HepG2 (cell line): ENCODE measurements at regions of chr13 and their contacts with region 1.

Region 1: GRCh38 chr13:29850224-29850898 is at the start of gene UBL3:
- DNase-seq: peak; percentile 90
- ATAC-seq: peak; percentile 85
- H3K4me3 ChIP-seq: peak within 1 kb of the TSS; percentile 65 to 96 (median 85)
- H3K27ac ChIP-seq: peak within 1 kb of the TSS; percentile 81
- H3K4me1 ChIP-seq: peaks cover 21% of the 10 kb centered on the region
- H3K27me3 ChIP-seq: no peaks in the 10 kb centered on the region; a peak in 1 of 5 replicates
- CTCF ChIP-seq: 0 out of 2 replicates have a peak, but pooled peaks have one; percentile 14
- EP300 ChIP-seq: peak in 1 of 2 experiments; percentile 15; a peak in 1 of 4 replicates
- POLR2A ChIP-seq: peak; percentile 46 to 64; a peak in 3 of 4 replicates
- RAD21 ChIP-seq: no peak
- total RNA-seq, gene UBL3: 7.4 and 10.9 TPM in 2 replicates

Region 2: DNA sequence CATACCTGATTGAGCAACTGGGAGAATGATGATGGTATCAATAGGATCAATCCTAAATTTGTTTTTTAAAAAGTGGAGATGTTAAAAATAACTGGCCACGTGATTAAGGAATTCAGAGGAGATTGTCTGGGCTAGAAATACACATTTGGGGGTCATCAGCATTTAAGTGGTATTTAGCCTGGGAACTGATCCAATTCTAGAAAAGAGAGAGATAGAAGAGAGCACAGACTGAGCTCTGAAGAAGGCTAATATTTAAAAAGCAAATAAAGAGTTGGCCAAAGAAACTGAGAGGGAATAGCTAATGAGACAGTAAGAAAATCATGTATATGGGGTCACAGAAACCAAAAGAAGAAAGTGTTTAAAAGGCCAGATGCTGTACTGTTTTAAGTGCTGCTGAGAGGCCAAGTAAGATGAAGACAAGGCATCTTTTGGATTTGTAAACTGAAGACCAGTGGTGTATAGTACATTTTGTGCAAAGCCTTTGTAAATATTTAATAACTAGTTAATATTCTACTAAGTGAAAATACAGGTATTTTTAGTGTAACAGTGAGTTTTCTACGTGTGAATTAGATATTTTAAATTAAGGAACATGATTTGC is 40.1 kb before region 1 on chr13:
- CTCF ChIA-PET with region 1: no interaction called
- POLR2A ChIA-PET with region 1: no interaction called
- in situ Hi-C with region 1: no loop called
- intact Hi-C with region 1: loop called (anchors 5 kb)
- DNase-seq: peak; percentile 5
- ATAC-seq: peak; percentile 72
- H3K4me3 ChIP-seq: peak overlapping the region in 1 of 3 experiments; percentile 5; a peak in 1 of 6 replicates
- H3K27ac ChIP-seq: peak overlapping the region; percentile 30
- H3K4me1 ChIP-seq: peaks cover 36% of the 10 kb centered on the region
- H3K27me3 ChIP-seq: no peaks in the 10 kb centered on the region
- CTCF ChIP-seq: no peak
- EP300 ChIP-seq: no peak
- POLR2A ChIP-seq: no peak
- RAD21 ChIP-seq: no peak

Region 3: GRCh38 chr13:29923554-29924481 is 73.5 kb after region 1 on chr13:
- CTCF ChIA-PET with region 1: interaction called, 4 read pairs
- POLR2A ChIA-PET with region 1: interaction called, 58 read pairs
- in situ Hi-C with region 1: loop called (anchors 5 kb)
- intact Hi-C with region 1: loop called (anchors 1 kb)
- DNase-seq: peak; percentile 99
- ATAC-seq: peak; percentile 96
- H3K4me3 ChIP-seq: peak overlapping the region; percentile 22 to 65 (median 34); a peak in 4 of 6 replicates
- H3K27ac ChIP-seq: peak overlapping the region; percentile 81
- H3K4me1 ChIP-seq: peaks cover 67% of the 10 kb centered on the region
- H3K27me3 ChIP-seq: no peaks in the 10 kb centered on the region
- CTCF ChIP-seq: peak; percentile 93
- EP300 ChIP-seq: peak in 1 of 2 experiments; percentile 91; a peak in 2 of 4 replicates
- POLR2A ChIP-seq: peak in 1 of 2 experiments; percentile 75; a peak in 2 of 4 replicates
- RAD21 ChIP-seq: peak; percentile 90